SK-N-SH (cell line): ENCODE measurements at regions of chrX and their contacts with region 1.

Region 1: DNA sequence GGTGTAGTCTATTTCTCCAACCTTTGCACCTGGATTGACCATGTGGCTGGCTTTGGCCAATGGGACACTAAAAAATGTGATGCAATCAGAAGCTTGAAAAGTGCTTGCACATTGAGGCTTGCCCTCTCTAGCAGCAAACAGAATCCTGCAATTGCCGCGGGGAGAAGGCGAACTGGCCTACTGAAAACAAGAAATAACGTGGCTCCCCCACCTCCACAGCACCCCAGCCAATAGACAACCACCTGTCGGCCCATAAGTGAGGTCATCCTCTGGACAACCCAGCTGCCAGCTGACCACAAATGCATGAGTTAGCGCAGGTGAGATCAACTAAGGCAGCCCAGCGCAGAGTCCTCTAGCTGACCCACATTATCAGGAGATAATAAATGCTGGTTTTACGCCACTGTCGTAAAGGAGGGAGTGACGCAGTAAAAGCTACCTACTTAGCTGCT is 95.2 kb downstream of the GK start:
- DNase-seq: no peak
- H3K4me3 ChIP-seq: no peak overlapping the region
- H3K27ac ChIP-seq: no peak overlapping the region
- H3K4me1 ChIP-seq: no peaks in the 10 kb centered on the region
- H3K27me3 ChIP-seq: no peaks in the 10 kb centered on the region
- CTCF ChIP-seq: no peak
- EP300 ChIP-seq: no peak
- RAD21 ChIP-seq: no peak

Region 2: DNA sequence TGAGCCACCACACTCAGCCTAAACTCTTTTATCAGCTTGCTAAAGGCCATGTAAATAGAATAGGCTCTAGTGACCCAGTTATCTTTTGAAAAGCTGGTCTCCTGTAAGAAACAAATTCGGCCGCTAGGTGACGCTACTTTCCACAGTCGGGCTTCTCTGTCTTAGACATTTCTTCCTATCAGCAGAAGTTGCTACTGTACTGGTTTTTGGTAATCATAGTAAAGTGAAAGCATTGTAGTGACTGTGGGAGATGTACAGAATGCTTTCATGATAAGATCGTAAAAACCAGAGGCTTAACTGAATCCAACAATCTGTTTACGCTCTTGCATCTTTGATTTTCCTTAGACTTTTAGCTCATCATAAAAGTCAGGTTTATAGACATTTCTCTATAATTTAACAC is 12.6 kb before region 1 on chrX:
- CTCF ChIA-PET with region 1: interaction called, 16 read pairs
- POLR2A ChIA-PET with region 1: no interaction called
- DNase-seq: peak; percentile 45
- H3K4me3 ChIP-seq: no peak overlapping the region; a peak in 1 of 4 replicates
- H3K27ac ChIP-seq: no peak overlapping the region
- H3K4me1 ChIP-seq: no peaks in the 10 kb centered on the region
- H3K27me3 ChIP-seq: no peaks in the 10 kb centered on the region; the same call in 1 of the 2 replicates
- CTCF ChIP-seq: peak; percentile 88
- EP300 ChIP-seq: no peak
- RAD21 ChIP-seq: peak; percentile 75

Region 3: DNA sequence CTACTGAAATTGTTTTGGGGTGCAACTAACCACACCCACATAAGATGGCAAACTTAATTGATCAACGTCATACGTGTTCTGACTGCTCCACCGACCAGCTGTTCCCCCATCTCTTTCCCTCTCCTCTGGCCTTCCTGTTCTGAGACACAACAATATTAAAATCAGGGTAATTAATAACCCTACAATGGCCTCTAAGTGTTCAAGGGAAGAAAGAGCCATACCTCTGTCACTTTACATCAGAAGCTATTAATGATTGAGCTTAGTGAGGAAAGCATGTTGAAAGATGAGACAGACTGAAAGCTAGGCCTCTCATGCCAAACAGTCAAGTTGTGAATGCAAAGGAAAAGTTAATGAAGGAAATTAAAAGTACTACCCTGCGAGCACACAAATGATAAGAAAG is 497.3 kb after region 1 on chrX:
- CTCF ChIA-PET with region 1: no interaction called
- POLR2A ChIA-PET with region 1: no interaction called
- DNase-seq: no peak
- H3K4me3 ChIP-seq: no peak overlapping the region
- H3K27ac ChIP-seq: no peak overlapping the region
- H3K4me1 ChIP-seq: no peaks in the 10 kb centered on the region
- H3K27me3 ChIP-seq: no peaks in the 10 kb centered on the region
- CTCF ChIP-seq: no peak
- EP300 ChIP-seq: no peak
- RAD21 ChIP-seq: no peak